CD8-positive, alpha-beta T cell (primary cell): ENCODE measurements at regions of chr19 and their contacts with region 1.

Region 1: GRCh38 chr19:18831524-18832305 is at the start of gene UPF1:
- DNase-seq: peak; percentile 92 to 98 (median 96)
- ATAC-seq: peak; percentile 79
- H3K4me3 ChIP-seq: peak within 1 kb of the TSS; percentile 80 to 86
- H3K4me3 Mint-ChIP-seq: peak within 1 kb of the TSS; percentile 92
- H3K27ac ChIP-seq: peak within 1 kb of the TSS; percentile 69 to 73
- H3K27ac Mint-ChIP-seq: peak within 1 kb of the TSS; percentile 89
- H3K4me1 ChIP-seq: peaks cover 41% of the 10 kb centered on the region
- H3K4me1 Mint-ChIP-seq: peaks cover 38% of the 10 kb centered on the region
- H3K27me3 ChIP-seq: peaks cover 0 to 3% of the 10 kb centered on the region in 2 experiments
- H3K27me3 Mint-ChIP-seq: peaks cover 2% of the 10 kb centered on the region
- CTCF ChIP-seq: no peak
- total RNA-seq, gene UPF1: 157 to 175 TPM

Region 2: GRCh38 chr19:18428787-18429674 is 402.7 kb before region 1 on chr19:
- CTCF ChIA-PET with region 1: no interaction called
- POLR2A ChIA-PET with region 1: no interaction called
- intact Hi-C with region 1: loop called in 1 of 2 experiments (anchors 5 kb)
- DNase-seq: peak; percentile 80 to 97 (median 89)
- ATAC-seq: peak; percentile 73
- H3K4me3 ChIP-seq: peak overlapping the region; percentile 44 to 58
- H3K4me3 Mint-ChIP-seq: peak overlapping the region; percentile 76
- H3K27ac ChIP-seq: peak overlapping the region; percentile 86 to 96
- H3K27ac Mint-ChIP-seq: peak overlapping the region; percentile 83
- H3K4me1 ChIP-seq: peaks cover 58% of the 10 kb centered on the region
- H3K4me1 Mint-ChIP-seq: peaks cover 35% of the 10 kb centered on the region
- H3K27me3 ChIP-seq: no peaks in the 10 kb centered on the region
- H3K27me3 Mint-ChIP-seq: no peaks in the 10 kb centered on the region
- CTCF ChIP-seq: no peak

Region 3: GRCh38 chr19:18672606-18673337 is 158.9 kb before region 1 on chr19:
- CTCF ChIA-PET with region 1: no interaction called
- POLR2A ChIA-PET with region 1: no interaction called
- intact Hi-C with region 1: no loop called
- DNase-seq: no peak
- ATAC-seq: no peak
- H3K4me3 ChIP-seq: no peak overlapping the region
- H3K4me3 Mint-ChIP-seq: no peak overlapping the region
- H3K27ac ChIP-seq: no peak overlapping the region
- H3K27ac Mint-ChIP-seq: no peak overlapping the region
- H3K4me1 ChIP-seq: no peaks in the 10 kb centered on the region
- H3K4me1 Mint-ChIP-seq: no peaks in the 10 kb centered on the region
- H3K27me3 ChIP-seq: no peaks in the 10 kb centered on the region
- H3K27me3 Mint-ChIP-seq: no peaks in the 10 kb centered on the region
- CTCF ChIP-seq: no peak

Region 4: DNA sequence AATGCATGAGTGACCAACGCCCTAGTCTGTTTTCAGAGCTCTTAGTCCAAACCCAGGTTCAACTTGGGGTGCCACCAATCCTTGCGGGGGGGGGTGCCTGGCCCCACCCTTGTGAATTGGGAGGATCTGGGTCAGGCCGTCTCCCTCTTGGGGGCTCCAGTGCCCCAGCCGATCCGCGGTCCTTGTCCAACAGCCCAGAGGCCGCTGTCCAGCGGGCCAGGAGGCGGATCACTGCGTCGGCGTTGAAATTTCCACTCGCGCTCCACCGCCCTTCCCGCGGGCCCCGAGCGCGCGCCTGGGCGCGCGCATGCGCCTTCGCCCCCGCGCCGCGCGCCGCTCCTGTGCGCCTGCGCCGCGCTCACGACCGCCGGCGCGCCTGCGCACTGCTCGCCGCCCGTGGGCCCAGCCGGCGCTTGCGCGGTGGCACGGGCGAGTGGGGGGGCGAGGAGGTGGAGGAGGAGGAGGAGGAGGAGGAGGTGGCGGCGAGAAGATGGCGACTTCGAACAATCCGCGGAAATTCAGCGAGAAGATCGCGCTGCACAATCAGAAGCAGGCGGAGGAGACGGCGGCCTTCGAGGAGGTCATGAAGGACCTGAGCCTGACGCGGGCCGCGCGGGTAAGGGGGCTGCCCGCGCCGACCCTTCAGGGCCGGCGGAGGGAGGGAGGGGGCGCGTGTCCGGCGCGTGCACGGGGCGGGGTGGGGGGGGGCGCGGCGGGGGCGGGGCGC is 148.3 kb before region 1 on chr19 and contains the start of gene CRTC1:
- CTCF ChIA-PET with region 1: no interaction called
- POLR2A ChIA-PET with region 1: interaction called, 3 read pairs
- intact Hi-C with region 1: loop called (anchors 1 to 2 kb)
- DNase-seq: peak; percentile 90 to 97 (median 95)
- ATAC-seq: peak; percentile 90
- H3K4me3 ChIP-seq: peak within 1 kb of the TSS; percentile 63 to 91
- H3K4me3 Mint-ChIP-seq: peak within 1 kb of the TSS; percentile 87
- H3K27ac ChIP-seq: peak within 1 kb of the TSS; percentile 65 to 67
- H3K27ac Mint-ChIP-seq: peak within 1 kb of the TSS; percentile 82
- H3K4me1 ChIP-seq: peaks cover 20% of the 10 kb centered on the region
- H3K4me1 Mint-ChIP-seq: peaks cover 33% of the 10 kb centered on the region
- H3K27me3 ChIP-seq: no peaks in the 10 kb centered on the region
- H3K27me3 Mint-ChIP-seq: no peaks in the 10 kb centered on the region
- CTCF ChIP-seq: no peak
- total RNA-seq, gene CRTC1: 7.1 to 7.5 TPM

Region 5: DNA sequence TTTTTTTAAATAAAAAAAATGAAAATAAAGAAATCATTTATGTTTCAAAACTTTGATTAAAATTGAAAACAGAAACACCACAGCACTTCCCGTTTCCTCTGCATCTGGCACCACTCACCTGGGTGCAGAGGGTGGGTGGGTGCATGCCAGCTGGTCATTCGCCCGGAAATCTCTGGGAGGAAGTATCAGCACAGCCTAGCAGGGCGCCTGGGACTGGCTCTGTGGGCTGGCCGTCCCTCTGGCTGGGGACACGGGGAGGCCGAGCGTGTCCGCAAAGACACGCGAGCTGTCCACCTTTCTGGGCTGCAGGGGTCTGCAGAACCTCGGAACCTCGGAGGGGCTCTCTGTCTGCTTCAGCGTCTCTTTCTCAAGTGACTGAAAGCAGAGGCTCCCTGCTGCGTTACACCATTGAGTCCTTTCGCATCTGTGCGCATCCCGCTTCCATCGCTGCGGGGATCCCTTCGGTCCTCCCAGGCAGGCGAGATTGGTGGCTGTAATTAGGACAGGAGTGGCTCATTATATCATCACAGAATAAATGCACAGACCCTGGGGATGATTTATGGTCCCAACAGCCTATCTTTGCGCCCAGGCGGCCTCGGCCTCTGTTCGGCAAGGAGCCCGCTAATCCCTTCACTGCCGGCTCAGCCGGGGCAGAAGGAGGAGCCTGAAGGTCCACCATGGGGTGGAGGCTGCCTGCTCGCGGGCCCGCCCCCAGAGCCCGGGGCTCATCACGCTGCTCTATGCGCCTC is 131.0 kb before region 1 on chr19:
- CTCF ChIA-PET with region 1: no interaction called
- POLR2A ChIA-PET with region 1: no interaction called
- intact Hi-C with region 1: loop called in 1 of 2 experiments (anchors 5 kb)
- DNase-seq: peak; percentile 47 to 84 (median 73)
- ATAC-seq: peak; percentile 97
- H3K4me3 ChIP-seq: peak overlapping the region; percentile 69 to 82
- H3K4me3 Mint-ChIP-seq: peak overlapping the region; percentile 88
- H3K27ac ChIP-seq: peak overlapping the region; percentile 73 to 75
- H3K27ac Mint-ChIP-seq: peak overlapping the region; percentile 89
- H3K4me1 ChIP-seq: peaks cover 34% of the 10 kb centered on the region
- H3K4me1 Mint-ChIP-seq: peaks cover 38% of the 10 kb centered on the region
- H3K27me3 ChIP-seq: no peaks in the 10 kb centered on the region
- H3K27me3 Mint-ChIP-seq: no peaks in the 10 kb centered on the region
- CTCF ChIP-seq: no peak

Region 6: GRCh38 chr19:18785179-18786128 is 46.3 kb before region 1 on chr19:
- CTCF ChIA-PET with region 1: no interaction called
- POLR2A ChIA-PET with region 1: no interaction called
- intact Hi-C with region 1: loop called in 1 of 2 experiments (anchors 5 kb)
- DNase-seq: peak; percentile 34 to 80 (median 63)
- ATAC-seq: peak; percentile 85
- H3K4me3 ChIP-seq: peak overlapping the region in 1 of 2 experiments; percentile 4
- H3K4me3 Mint-ChIP-seq: peak overlapping the region; percentile 49
- H3K27ac ChIP-seq: no peak overlapping the region
- H3K27ac Mint-ChIP-seq: no peak overlapping the region
- H3K4me1 ChIP-seq: peaks cover 24% of the 10 kb centered on the region
- H3K4me1 Mint-ChIP-seq: peaks cover 36% of the 10 kb centered on the region
- H3K27me3 ChIP-seq: peaks cover 27 to 36% of the 10 kb centered on the region in 2 experiments
- H3K27me3 Mint-ChIP-seq: peaks cover 47% of the 10 kb centered on the region
- CTCF ChIP-seq: no peak

Region 7: GRCh38 chr19:18846862-18847548 is 15.3 kb after region 1 on chr19:
- CTCF ChIA-PET with region 1: interaction called, 15 read pairs
- POLR2A ChIA-PET with region 1: interaction called, 20 read pairs
- intact Hi-C with region 1: no loop called
- DNase-seq: peak; percentile 37 to 81 (median 73)
- ATAC-seq: peak; percentile 65
- H3K4me3 ChIP-seq: no peak overlapping the region
- H3K4me3 Mint-ChIP-seq: peak overlapping the region; percentile 36
- H3K27ac ChIP-seq: no peak overlapping the region
- H3K27ac Mint-ChIP-seq: no peak overlapping the region
- H3K4me1 ChIP-seq: peaks cover 40% of the 10 kb centered on the region
- H3K4me1 Mint-ChIP-seq: peaks cover 56% of the 10 kb centered on the region
- H3K27me3 ChIP-seq: no peaks in the 10 kb centered on the region
- H3K27me3 Mint-ChIP-seq: no peaks in the 10 kb centered on the region
- CTCF ChIP-seq: peak; percentile 78